HEK293 (cell line): ENCODE measurements at regions of chr6 and their contacts with region 1.

Region 1: DNA sequence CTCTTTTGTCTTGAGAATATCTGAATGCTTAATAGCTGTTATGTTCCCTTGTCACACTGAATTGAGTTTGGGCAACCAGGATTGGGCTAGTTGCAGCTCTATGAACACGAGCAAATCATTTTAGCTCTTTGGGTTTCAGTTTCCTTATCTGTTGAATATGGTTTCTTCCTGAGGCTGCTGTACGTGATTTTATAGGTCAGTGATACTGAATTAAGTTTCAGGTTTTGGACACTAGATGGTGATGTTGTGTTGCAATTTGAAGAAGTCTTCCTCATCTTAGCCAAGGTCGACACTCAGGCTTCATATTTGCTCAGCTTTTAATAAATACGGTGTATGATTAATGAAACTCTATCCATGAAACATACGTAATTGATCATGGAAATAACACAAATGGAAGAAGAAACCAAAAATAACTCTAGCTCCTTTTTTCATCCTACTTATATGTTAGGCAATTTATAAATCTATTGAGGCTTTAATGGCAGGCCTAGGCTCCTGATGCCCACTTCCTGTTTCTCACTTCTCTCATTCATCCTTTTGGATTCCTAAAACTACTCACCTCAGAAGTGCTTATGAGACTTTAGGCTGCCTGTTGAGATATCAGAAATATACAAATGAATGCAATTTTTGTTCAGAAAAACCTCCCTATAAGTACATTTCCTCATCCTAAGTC is 354.1 kb upstream of the MAP3K7 start:
- H3K4me3 ChIP-seq: no peak overlapping the region
- H3K27ac ChIP-seq: no peak overlapping the region
- H3K4me1 ChIP-seq: no peaks in the 10 kb centered on the region
- CTCF ChIP-seq: peak; percentile 36

Region 2: GRCh38 chr6:90610751-90611542 is 330.0 kb before region 1 on chr6:
- CTCF ChIA-PET with region 1: interaction called, 25 read pairs
- POLR2A ChIA-PET with region 1: no interaction called
- H3K4me3 ChIP-seq: peak overlapping the region; percentile 62
- H3K27ac ChIP-seq: peak overlapping the region; percentile 93
- H3K4me1 ChIP-seq: peaks cover 6% of the 10 kb centered on the region
- CTCF ChIP-seq: peak; percentile 88

Region 3: GRCh38 chr6:90860822-90861601 is 79.9 kb before region 1 on chr6:
- CTCF ChIA-PET with region 1: interaction called, 23 read pairs
- POLR2A ChIA-PET with region 1: no interaction called
- H3K4me3 ChIP-seq: no peak overlapping the region
- H3K27ac ChIP-seq: no peak overlapping the region
- H3K4me1 ChIP-seq: no peaks in the 10 kb centered on the region
- CTCF ChIP-seq: no peak

Region 4: DNA sequence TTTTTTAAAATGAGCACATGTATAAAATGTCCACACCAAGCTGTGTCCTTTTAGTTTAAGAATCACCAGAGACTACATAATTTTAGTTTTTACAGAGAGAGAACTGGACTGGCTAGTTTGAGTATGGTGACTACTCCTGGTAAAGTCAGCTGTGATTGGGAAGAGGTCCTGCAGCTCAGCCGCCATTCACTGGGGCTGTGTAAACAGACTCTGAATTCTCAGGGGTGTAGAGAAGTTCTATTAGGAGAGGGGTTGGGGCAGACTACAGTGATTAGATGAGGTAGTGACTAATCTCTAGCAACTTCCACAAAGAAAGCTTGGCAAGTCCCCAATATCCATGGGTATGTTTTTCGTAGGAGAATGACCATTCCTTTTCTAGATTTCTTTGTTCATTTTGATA is 12.9 kb before region 1 on chr6:
- CTCF ChIA-PET with region 1: interaction called, 15 read pairs
- POLR2A ChIA-PET with region 1: no interaction called
- H3K4me3 ChIP-seq: no peak overlapping the region
- H3K27ac ChIP-seq: no peak overlapping the region
- H3K4me1 ChIP-seq: peaks cover 2% of the 10 kb centered on the region; the same call in 1 of the 2 replicates
- CTCF ChIP-seq: no peak

Region 5: GRCh38 chr6:91081452-91082067 is 140.6 kb after region 1 on chr6:
- CTCF ChIA-PET with region 1: interaction called, 33 read pairs
- POLR2A ChIA-PET with region 1: no interaction called
- H3K4me3 ChIP-seq: no peak overlapping the region
- H3K27ac ChIP-seq: no peak overlapping the region
- H3K4me1 ChIP-seq: no peaks in the 10 kb centered on the region
- CTCF ChIP-seq: peak; percentile 47